Mammary epithelial cell (primary cell): ENCODE measurements at regions of chr17 and their contacts with region 1.

Region 1: GRCh38 chr17:10737168-10737622 is 7.4 kb upstream of the TMEM220 start:
- DNase-seq: peak; percentile 21
- H3K4me3 ChIP-seq: no peak overlapping the region
- H3K27ac ChIP-seq: no peak overlapping the region
- H3K4me1 ChIP-seq: no peaks in the 10 kb centered on the region
- H3K27me3 ChIP-seq: no peaks in the 10 kb centered on the region
- CTCF ChIP-seq: peak; percentile 67 to 86

Region 2: GRCh38 chr17:10640475-10640874 is 96.7 kb before region 1 on chr17:
- CTCF ChIA-PET with region 1: no interaction called
- dilution Hi-C with region 1: loop called (anchors 5 kb)
- in situ Hi-C with region 1: no loop called
- intact Hi-C with region 1: no loop called
- DNase-seq: no peak
- H3K4me3 ChIP-seq: no peak overlapping the region
- H3K27ac ChIP-seq: no peak overlapping the region
- H3K4me1 ChIP-seq: no peaks in the 10 kb centered on the region
- H3K27me3 ChIP-seq: no peaks in the 10 kb centered on the region
- CTCF ChIP-seq: no peak

Region 3: GRCh38 chr17:10844621-10845387 is 107.6 kb after region 1 on chr17:
- CTCF ChIA-PET with region 1: no interaction called
- dilution Hi-C with region 1: no loop called
- in situ Hi-C with region 1: no loop called
- intact Hi-C with region 1: loop called (anchors 1 kb)
- DNase-seq: peak; percentile 22
- H3K4me3 ChIP-seq: peak overlapping the region in 2 of 3 experiments; percentile 22 to 47
- H3K27ac ChIP-seq: no peak overlapping the region
- H3K4me1 ChIP-seq: no peaks in the 10 kb centered on the region
- H3K27me3 ChIP-seq: no peaks in the 10 kb centered on the region
- CTCF ChIP-seq: peak; percentile 66 to 82

Region 4: GRCh38 chr17:10907370-10907769 is 170.2 kb after region 1 on chr17:
- CTCF ChIA-PET with region 1: no interaction called
- dilution Hi-C with region 1: no loop called
- in situ Hi-C with region 1: no loop called
- intact Hi-C with region 1: no loop called
- DNase-seq: no peak
- H3K4me3 ChIP-seq: no peak overlapping the region
- H3K27ac ChIP-seq: no peak overlapping the region
- H3K4me1 ChIP-seq: no peaks in the 10 kb centered on the region
- H3K27me3 ChIP-seq: no peaks in the 10 kb centered on the region
- CTCF ChIP-seq: no peak

Region 5: DNA sequence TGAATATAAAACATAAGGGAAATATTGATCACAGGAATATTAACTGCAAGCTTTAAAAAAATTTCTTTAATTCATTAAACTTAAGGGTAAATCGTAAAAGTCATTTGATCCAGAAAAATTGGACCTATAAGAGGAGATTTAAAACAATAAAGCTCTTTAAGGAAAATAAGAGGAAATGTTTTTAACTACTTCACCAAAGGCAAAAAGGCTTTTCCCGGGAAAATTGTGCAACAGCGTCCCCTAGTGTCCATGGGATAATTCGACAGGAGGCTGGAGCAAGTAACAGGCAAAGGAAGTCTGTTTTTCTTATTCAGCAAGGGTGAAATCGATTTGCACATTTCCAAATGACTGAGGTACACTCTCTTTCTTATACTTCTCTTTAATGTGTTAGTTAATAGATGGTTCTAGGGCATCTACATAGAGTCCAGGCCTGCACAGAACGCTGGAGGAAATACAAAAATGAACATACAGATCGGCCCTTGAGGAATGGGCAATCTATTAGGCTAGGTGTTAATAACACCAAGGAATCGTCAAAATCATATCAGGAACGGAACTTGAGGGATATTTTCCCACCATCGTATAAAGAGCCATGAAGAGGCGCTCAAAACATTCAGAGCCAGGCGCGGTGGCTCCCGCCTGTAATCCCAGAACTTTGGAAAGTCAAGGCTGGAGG is 1198.7 kb after region 1 on chr17:
- CTCF ChIA-PET with region 1: interaction called, 6 read pairs
- dilution Hi-C with region 1: no loop called
- in situ Hi-C with region 1: no loop called
- intact Hi-C with region 1: loop called (anchors 5 kb)
- DNase-seq: peak; percentile 51
- H3K4me3 ChIP-seq: no peak overlapping the region
- H3K27ac ChIP-seq: no peak overlapping the region
- H3K4me1 ChIP-seq: no peaks in the 10 kb centered on the region
- H3K27me3 ChIP-seq: no peaks in the 10 kb centered on the region
- CTCF ChIP-seq: peak; percentile 99